AG04450 (cell line): ENCODE measurements at regions of chr2 and their contacts with region 1.

Region 1: GRCh38 chr2:3516831-3517230 is 2.5 kb downstream of the ADI1 start:
- DNase-seq: no peak
- H3K4me3 ChIP-seq: no peak overlapping the region
- H3K27ac ChIP-seq: no peak overlapping the region
- H3K27me3 ChIP-seq: no peaks in the 10 kb centered on the region
- CTCF ChIP-seq: no peak

Region 2: GRCh38 chr2:3505771-3506170 is 11.1 kb before region 1 on chr2:
- CTCF ChIA-PET with region 1: no interaction called
- POLR2A ChIA-PET with region 1: interaction called, 11 read pairs
- DNase-seq: no peak
- H3K4me3 ChIP-seq: no peak overlapping the region
- H3K27ac ChIP-seq: no peak overlapping the region
- H3K27me3 ChIP-seq: no peaks in the 10 kb centered on the region
- CTCF ChIP-seq: no peak